Dendritic cell treated with granulocyte-macrophage colony-stimulating factor and Interleukin-4, amounts not matched to agents 40 ng/mL and 50 ng/mL, for 4 days (primary cell): ENCODE measurements at regions of chr9 and their contacts with region 1.

Region 1: DNA sequence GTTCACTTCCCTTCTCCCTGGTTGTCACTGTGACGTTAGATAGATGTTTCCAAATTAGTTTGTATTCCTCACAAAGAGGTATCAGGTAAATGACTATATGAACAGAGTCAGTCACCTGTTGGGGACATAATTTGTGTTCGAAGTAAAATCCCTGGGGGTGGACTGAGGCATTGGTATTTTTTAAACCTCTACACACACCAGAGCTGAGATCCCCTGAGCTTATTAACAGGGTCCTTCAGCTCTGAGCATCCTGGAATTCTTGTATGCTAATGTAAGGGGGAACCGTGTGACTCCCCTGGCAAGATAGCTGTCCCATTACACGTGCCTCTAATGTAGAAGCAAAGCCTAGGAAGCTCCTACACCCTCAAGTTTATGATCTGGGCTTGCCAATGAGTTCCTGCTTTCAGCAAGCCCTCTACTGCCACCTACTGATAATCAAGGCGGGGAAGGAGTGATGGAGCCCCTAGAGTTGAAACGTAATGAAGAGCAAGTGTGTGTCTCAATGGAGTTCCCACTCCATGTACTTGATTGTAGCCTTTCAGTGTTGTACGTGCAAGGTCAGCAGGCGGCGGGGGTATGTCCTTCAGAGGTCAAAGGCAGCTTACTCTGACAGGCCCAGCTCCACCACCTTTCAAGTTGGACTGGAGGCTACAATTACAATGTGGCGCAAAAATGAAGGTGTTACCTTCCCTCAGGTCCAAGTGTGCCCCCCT is 14.4 kb downstream of the PRKACG start:
- H3K4me3 Mint-ChIP-seq: no peak overlapping the region
- H3K27ac Mint-ChIP-seq: peak overlapping the region; percentile 89
- H3K4me1 Mint-ChIP-seq: peaks cover 47% of the 10 kb centered on the region
- H3K27me3 Mint-ChIP-seq: no peaks in the 10 kb centered on the region

Region 2: GRCh38 chr9:68584189-68585033 is 415.1 kb before region 1 on chr9:
- intact Hi-C with region 1: loop called (anchors 1 kb)
- H3K4me3 Mint-ChIP-seq: no peak overlapping the region
- H3K27ac Mint-ChIP-seq: no peak overlapping the region
- H3K4me1 Mint-ChIP-seq: peaks cover 15% of the 10 kb centered on the region
- H3K27me3 Mint-ChIP-seq: peaks cover 3% of the 10 kb centered on the region

Region 3: GRCh38 chr9:68704814-68705530 is 294.6 kb before region 1 on chr9 and contains the start of gene PIP5K1B:
- intact Hi-C with region 1: loop called (anchors 5 kb)
- H3K4me3 Mint-ChIP-seq: peak within 1 kb of the TSS; percentile 93
- H3K27ac Mint-ChIP-seq: peak within 1 kb of the TSS; percentile 84
- H3K4me1 Mint-ChIP-seq: peaks cover 33% of the 10 kb centered on the region
- H3K27me3 Mint-ChIP-seq: peaks cover 43% of the 10 kb centered on the region

Region 4: DNA sequence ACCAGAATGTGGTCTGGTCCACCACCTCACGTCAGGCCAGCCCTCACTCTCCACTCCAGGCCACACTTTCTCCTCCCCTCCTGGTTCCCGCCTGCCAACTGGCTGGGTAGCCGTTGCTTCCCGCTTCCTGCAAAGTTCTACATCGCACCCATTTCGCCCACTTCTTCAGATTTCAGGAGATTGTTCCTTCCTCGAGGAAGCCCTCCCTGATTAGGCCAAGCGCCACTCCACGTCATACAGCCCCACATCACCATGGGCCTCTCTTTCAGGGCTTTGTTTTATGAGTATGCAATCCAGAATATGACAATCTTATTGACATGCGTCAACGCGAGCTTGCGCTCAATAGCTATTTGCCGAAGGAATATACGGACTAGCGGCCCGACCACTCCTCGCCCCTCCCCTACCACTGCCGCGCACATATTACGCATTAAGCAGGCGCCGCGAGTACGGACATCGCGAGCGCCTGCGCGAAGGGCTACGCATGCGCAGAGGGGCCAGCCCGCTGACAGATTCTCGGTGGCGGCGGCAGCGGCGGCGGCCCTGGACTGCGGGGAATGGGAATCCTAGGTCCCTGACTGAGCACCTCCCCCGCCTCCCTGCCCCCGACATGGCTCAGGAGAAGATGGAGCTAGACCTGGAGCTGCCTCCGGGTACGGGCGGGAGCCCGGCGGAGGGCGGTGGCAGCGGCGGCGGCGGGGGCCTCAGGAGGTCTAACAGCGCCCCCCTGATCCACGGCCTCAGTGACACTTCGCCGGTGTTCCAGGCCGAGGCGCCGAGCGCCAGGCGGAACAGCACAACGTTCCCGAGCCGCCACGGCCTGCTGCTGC is 219.8 kb before region 1 on chr9:
- intact Hi-C with region 1: loop called (anchors 5 kb)
- H3K4me3 Mint-ChIP-seq: no peak overlapping the region
- H3K27ac Mint-ChIP-seq: no peak overlapping the region
- H3K4me1 Mint-ChIP-seq: peaks cover 5% of the 10 kb centered on the region
- H3K27me3 Mint-ChIP-seq: no peaks in the 10 kb centered on the region

Region 5: GRCh38 chr9:68844631-68845612 is 154.6 kb before region 1 on chr9:
- intact Hi-C with region 1: loop called (anchors 10 kb)
- H3K4me3 Mint-ChIP-seq: peak overlapping the region; percentile 79
- H3K27ac Mint-ChIP-seq: peak overlapping the region; percentile 86
- H3K4me1 Mint-ChIP-seq: peaks cover 45% of the 10 kb centered on the region
- H3K27me3 Mint-ChIP-seq: no peaks in the 10 kb centered on the region

Region 6: GRCh38 chr9:68951879-68952659 is 47.5 kb before region 1 on chr9:
- intact Hi-C with region 1: loop called (anchors 5 kb)
- H3K4me3 Mint-ChIP-seq: peak overlapping the region; percentile 47
- H3K27ac Mint-ChIP-seq: peak overlapping the region; percentile 88
- H3K4me1 Mint-ChIP-seq: peaks cover 60% of the 10 kb centered on the region
- H3K27me3 Mint-ChIP-seq: no peaks in the 10 kb centered on the region

Region 7: GRCh38 chr9:68978066-68978465 is 21.5 kb before region 1 on chr9:
- intact Hi-C with region 1: loop called (anchors 1 kb)
- H3K4me3 Mint-ChIP-seq: no peak overlapping the region
- H3K27ac Mint-ChIP-seq: peak overlapping the region; percentile 92
- H3K4me1 Mint-ChIP-seq: peaks cover 68% of the 10 kb centered on the region
- H3K27me3 Mint-ChIP-seq: no peaks in the 10 kb centered on the region

Region 8: DNA sequence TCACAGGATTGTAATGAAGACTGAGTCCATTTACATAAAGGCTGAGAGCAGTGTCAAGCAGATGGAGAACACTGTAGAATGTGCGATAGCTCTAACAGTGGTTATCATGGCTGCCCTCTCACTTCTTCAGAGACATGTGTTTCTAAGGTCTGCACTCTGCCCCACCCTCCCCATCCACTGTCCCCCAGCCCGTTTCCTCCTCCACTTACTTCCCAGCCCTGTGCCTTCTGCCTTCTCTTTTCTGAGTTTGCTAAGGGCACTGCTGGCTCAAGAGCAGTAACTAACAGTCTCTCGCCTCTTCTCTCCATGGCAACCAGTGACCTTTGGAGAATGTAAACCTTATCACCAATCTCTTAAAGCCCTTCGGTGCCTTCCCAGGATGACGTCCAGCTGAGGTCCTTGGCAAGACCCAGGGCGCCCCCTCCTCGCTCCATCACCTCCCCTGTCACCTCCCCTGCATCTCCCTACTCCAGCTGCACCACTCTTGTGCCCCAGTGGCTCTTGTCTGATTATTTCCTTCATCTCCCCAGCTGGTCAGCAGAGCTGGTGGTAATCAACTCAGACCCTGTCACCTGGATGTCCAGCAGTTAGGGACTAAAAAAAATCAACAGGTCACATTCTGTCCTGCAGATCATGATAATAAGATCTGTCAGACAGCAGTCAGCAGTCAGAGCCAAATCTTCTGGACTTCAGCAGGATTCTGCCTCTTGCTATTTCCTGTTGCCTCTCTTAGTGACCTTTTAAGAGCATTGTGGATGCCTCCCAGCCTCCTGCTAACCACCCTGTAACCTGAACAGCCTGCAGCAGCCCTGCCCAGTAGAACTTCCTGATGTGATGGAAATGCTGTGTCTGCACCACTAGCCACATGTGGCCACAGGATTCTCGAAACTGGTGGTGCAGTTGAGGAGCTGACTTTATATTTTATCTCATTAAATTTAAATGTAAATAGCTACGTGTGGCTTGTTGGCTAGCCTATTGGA is 45.0 kb after region 1 on chr9:
- intact Hi-C with region 1: no loop called
- H3K4me3 Mint-ChIP-seq: no peak overlapping the region
- H3K27ac Mint-ChIP-seq: peak overlapping the region; percentile 8
- H3K4me1 Mint-ChIP-seq: peaks cover 29% of the 10 kb centered on the region
- H3K27me3 Mint-ChIP-seq: no peaks in the 10 kb centered on the region